Activated naive CD4-positive, alpha-beta T cell treated with anti-CD3 and anti-CD28 coated beads for 36 hours (primary cell): ENCODE measurements at regions of chr6 and their contacts with region 1.

Region 1: GRCh38 chr6:27545271-27546046 is 72.6 kb upstream of the ZNF184 start:
- DNase-seq: peak; percentile 71
- H3K4me3 Mint-ChIP-seq: peak overlapping the region; percentile 67
- H3K27ac Mint-ChIP-seq: no peak overlapping the region
- H3K4me1 Mint-ChIP-seq: peaks cover 16% of the 10 kb centered on the region
- H3K27me3 Mint-ChIP-seq: peaks cover 81% of the 10 kb centered on the region

Region 2: DNA sequence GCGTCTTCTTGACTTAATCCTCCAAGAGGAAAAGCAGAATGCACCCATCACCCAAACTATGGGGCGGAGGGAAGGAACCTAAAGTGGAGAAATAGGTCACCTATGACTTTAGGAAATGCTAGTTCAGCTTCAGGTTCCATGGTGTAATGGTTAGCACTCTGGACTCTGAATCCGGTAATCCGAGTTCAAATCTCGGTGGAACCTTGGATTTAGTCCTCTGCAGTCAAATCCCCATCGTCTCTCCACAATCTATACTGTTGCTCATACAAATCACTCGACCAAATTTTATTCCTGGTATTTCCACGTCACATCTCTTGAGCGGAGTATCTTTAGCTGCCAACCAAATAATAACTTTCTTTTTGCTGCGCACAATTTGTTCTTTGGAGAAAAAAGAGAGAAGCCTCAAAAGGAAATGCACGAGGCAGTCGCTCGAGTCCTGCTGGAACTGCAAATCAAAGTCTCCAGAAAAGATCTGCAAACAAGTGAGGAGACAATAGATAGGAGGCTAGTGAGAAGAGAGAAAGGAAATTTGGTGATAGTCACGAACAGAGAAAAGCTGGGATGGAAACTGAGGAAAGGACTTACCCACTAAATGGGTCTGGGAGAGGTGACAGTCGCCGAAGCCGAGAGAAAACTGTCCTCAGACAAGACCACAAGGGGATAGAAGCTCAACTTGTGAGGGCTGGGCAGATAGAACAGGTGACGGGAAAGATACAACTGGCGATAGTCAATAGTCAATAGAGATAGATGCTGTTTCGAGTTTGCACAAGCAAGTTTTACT is 250.0 kb before region 1 on chr6:
- CTCF ChIA-PET with region 1: no interaction called
- intact Hi-C with region 1: loop called (anchors 5 kb)
- DNase-seq: no peak
- H3K4me3 Mint-ChIP-seq: no peak overlapping the region
- H3K27ac Mint-ChIP-seq: no peak overlapping the region
- H3K4me1 Mint-ChIP-seq: peaks cover 3% of the 10 kb centered on the region
- H3K27me3 Mint-ChIP-seq: peaks cover 79% of the 10 kb centered on the region

Region 3: GRCh38 chr6:27592481-27593199 is 47.2 kb after region 1 on chr6:
- CTCF ChIA-PET with region 1: no interaction called
- intact Hi-C with region 1: loop called (anchors 5 kb)
- DNase-seq: peak; percentile 71
- H3K4me3 Mint-ChIP-seq: no peak overlapping the region
- H3K27ac Mint-ChIP-seq: no peak overlapping the region
- H3K4me1 Mint-ChIP-seq: no peaks in the 10 kb centered on the region
- H3K27me3 Mint-ChIP-seq: peaks cover 26% of the 10 kb centered on the region

Region 4: DNA sequence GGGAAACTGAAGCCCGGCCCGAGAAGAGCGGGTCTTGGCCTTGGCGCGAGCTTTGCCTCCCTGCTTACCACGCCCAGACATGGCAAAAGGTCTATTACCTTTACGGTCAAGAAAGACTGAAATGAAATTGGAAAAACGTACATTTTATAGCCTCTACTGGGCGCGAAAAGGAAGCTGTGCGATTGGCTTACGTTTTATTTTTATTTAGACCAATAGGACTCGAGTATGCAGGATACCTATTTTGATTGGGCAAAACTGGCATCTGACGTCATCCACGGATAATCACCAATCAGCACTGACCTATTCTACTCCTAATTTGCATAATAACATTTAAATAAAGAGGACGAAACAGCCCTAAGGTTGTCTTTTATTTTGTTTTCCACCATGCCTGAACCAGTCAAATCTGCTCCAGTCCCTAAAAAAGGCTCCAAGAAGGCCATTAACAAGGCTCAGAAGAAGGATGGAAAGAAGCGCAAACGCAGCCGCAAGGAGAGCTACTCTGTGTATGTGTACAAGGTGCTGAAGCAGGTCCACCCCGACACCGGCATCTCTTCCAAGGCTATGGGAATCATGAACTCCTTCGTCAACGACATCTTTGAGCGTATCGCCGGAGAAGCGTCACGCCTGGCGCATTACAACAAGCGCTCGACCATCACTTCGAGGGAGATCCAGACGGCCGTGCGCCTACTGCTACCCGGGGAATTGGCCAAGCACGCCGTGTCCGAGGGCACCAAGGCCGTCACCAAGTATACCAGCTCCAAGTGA is 269.4 kb after region 1 on chr6:
- CTCF ChIA-PET with region 1: no interaction called
- intact Hi-C with region 1: no loop called
- DNase-seq: peak; percentile 90
- H3K4me3 Mint-ChIP-seq: peak overlapping the region; percentile 85
- H3K27ac Mint-ChIP-seq: peak overlapping the region; percentile 99
- H3K4me1 Mint-ChIP-seq: peaks cover 29% of the 10 kb centered on the region
- H3K27me3 Mint-ChIP-seq: peaks cover 3% of the 10 kb centered on the region